Activated CD8-positive, alpha-beta memory T cell treated with anti-CD3 and anti-CD28 coated beads, Interleukin-2, amount 10 ng/mL, durations not matched to agents 7 days and 5 days (primary cell): ENCODE measurements at regions of chr19 and their contacts with region 1.

Region 1: DNA sequence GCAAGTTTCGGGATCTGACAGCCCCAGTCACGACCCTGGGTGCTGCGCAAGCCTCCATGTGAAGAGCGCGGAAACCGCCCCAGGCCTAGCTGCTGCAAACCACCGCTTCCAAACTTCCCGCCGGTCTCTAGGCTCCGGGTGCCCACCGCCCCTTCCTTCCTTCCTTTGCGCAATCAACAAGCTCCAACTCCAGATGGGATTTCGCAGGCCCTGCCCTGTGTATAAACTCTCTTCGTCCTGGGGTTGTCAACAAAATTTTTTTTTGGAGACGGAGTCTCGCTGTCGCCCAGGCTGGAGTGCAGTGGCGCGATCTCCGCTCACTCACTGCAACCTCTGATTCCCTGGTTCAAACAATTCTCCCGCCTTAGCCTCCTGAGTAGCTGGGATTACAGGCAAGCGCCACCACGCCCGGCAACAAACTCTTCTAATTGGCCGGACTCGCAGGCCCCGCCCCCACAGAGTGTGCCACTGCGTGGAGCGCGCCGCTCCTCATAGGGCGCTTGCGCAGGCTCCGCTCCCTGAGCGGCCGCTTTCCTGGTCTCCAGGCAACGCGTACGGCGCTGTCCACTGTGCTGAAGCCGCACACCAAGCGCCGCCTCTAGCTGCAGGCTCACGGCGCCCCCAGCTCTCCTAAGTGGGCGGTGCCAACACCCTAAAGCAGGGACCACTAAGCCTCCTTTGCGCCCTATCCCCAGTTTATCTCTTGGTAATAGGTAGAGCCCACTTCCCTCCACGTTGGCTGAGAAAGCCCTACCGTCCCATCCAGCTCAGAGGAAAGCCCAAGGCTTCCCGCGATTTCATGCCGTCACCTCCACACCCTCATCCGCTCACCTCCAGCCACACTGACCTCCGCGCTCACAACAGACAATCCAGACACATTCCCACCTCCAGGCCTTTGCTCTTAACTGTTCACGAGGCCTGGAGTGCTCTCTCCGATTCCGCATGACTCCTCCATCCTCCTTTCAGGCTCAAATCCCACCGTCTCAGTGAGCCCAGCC is 5.5 kb upstream of the QTRT1 start:
- DNase-seq: peak; percentile 94
- ATAC-seq: peak; percentile 99
- H3K4me3 Mint-ChIP-seq: peak overlapping the region; percentile 67
- H3K27ac Mint-ChIP-seq: no peak overlapping the region
- H3K4me1 Mint-ChIP-seq: peaks cover 14% of the 10 kb centered on the region
- H3K27me3 Mint-ChIP-seq: peaks cover 12% of the 10 kb centered on the region

Region 2: DNA sequence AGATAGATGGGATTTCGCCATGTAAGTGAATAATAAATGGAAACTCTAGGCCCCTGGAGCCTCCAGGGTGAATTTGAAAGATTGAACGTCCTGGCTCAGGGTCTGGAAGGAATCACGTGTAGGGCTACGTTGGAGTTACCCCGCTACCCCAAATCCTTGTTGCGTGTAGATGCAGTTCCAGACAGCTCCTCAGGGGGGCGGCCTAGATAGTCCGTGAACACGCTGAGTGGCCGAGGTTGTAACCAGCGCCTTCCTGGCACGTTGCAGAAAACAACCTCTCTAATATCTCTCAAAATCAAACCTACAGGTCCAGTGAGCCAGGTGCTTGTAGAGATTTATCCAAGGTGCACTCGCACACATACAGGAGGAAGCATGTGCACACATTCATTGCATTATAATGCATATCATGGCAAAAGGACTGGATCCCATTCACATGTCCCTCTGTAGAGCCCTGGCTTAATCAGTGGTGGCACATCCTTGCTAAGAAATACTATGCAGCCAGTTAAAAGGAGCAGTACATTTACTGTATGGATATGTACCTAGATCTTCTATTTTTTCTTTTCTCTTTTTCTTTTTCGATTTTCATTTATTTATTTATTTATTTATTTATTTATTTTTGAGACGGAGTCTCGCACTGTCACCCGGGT is 190.0 kb before region 1 on chr19:
- CTCF ChIA-PET with region 1: interaction called, 12 read pairs
- DNase-seq: peak; percentile 91
- ATAC-seq: peak; percentile 10
- H3K4me3 Mint-ChIP-seq: no peak overlapping the region
- H3K27ac Mint-ChIP-seq: peak overlapping the region; percentile 66
- H3K4me1 Mint-ChIP-seq: peaks cover 37% of the 10 kb centered on the region
- H3K27me3 Mint-ChIP-seq: no peaks in the 10 kb centered on the region

Region 3: DNA sequence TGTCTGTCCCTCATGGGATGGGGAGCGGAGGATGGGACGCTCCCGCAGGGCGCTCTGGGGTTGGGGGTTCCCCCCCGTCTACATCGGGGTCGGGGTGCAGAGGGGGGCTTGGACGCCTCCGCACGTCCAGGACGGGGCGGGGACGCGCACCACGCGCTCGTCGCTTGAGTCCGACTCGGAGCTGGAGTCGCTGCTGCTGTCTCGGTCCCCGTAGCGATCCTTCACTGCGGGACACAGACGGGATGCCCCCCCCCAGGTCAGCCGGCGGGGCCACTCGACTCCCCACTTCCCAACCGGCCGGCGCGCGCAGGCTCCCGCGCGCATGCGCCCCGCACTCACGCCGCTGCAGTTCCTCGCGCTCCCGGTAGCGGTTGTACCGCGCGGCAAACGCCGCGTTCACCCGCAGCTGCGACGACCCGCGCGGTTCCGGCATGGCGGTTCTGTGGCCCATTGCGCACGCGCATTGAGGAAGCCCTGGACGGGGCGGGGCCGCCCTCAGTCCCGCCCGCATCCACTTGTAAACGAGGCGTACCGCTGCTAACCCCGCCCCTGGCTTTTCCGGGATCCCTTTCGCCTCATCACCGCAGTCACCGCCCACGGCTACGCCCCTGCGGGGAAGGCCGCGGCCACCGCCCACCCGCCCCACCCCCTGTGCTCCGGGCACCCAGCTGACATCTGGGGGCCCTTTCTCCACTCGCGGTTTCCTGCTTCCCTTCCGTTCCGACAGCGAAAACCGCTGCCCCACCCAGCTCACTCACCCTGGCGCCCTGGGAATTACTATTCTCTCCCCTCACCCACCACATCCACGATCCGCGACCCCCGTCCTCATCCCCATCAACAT is 129.9 kb before region 1 on chr19 and contains the start of gene KRI1:
- CTCF ChIA-PET with region 1: interaction called, 82 read pairs
- DNase-seq: peak; percentile 99
- ATAC-seq: peak; percentile 48
- H3K4me3 Mint-ChIP-seq: peak within 1 kb of the TSS; percentile 96
- H3K27ac Mint-ChIP-seq: peak within 1 kb of the TSS; percentile 93
- H3K4me1 Mint-ChIP-seq: peaks cover 40% of the 10 kb centered on the region
- H3K27me3 Mint-ChIP-seq: no peaks in the 10 kb centered on the region
- total RNA-seq, gene KRI1: 68.1 to 72.2 TPM

Region 4: DNA sequence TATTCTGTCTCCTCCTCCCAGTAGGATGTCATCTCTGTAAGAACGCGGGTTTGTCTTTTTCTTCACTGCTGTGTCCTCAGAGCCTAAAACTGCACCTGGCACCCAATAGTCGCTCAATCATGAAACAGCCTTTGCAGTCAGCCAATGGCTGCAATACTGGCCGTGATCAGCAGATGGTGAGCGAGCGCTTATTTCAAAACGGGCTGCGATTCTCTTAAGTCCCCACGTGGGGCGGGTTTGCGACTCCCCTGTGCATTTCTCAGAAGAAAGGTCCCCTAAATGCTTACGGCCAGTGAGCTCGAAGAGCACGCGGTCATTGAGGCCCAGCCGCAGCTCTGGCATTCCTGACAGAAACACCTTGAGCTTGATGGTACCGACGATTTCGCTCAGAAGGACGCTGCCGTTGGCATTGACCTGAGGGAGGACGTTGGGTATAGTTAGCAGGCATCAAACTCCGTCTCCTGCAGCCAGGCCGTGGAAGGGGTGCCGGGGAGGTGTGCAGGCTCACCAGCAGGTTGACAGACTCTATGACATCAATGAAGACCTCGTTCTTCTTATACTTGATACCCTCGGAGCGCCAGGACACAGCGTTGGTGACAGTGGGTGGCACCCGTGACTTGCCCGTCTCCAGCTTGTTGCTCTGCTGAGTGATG is 114.6 kb before region 1 on chr19:
- CTCF ChIA-PET with region 1: interaction called, 123 read pairs
- DNase-seq: peak; percentile 94
- ATAC-seq: peak; percentile 96
- H3K4me3 Mint-ChIP-seq: no peak overlapping the region
- H3K27ac Mint-ChIP-seq: no peak overlapping the region
- H3K4me1 Mint-ChIP-seq: peaks cover 20% of the 10 kb centered on the region
- H3K27me3 Mint-ChIP-seq: no peaks in the 10 kb centered on the region

Region 5: DNA sequence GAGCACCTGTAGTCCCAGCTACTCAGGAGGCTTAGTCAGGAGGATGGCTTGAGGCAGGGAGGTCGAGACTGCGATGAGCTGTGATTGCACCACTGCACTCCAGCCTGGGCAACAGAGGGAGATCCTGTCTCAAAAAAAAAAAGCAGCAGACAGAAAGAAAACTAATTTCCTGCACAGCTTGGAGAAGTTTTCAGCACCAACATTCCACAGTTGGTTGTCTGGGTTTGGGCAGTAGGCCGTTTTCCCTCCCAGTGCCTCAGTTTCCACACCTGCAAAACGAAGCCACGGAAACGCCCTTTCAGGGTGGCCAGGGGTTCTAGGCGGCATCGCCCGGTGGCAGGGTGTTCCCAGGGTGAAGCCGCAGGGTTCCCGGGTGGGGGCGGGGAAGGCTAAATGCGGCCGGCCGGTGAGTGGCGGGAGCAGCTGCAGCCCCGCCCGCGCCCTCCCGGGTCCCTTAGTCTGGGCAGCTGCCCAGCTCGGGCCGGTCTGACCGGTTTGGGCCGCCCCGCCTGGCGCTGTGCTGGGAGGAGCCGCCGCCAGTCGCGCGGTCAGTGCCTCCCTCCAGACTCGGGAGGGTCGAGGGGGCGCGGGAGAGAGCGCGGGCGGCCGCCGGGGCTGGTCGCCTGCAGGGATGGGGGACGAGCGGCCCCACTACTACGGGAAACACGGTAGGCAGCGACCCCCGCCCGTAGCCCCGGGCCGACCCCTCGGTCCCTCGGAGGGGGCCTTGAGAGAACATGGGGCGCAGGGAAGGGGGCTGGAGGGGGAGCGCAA is 70.5 kb before region 1 on chr19 and contains the start of gene SLC44A2:
- CTCF ChIA-PET with region 1: no interaction called
- DNase-seq: no peak
- ATAC-seq: no peak
- H3K4me3 Mint-ChIP-seq: no peak within 1 kb of the TSS
- H3K27ac Mint-ChIP-seq: peak within 1 kb of the TSS; percentile 85
- H3K4me1 Mint-ChIP-seq: peaks cover 20% of the 10 kb centered on the region
- H3K27me3 Mint-ChIP-seq: no peaks in the 10 kb centered on the region
- total RNA-seq, gene SLC44A2: 83.4 to 86.8 TPM

Region 6: DNA sequence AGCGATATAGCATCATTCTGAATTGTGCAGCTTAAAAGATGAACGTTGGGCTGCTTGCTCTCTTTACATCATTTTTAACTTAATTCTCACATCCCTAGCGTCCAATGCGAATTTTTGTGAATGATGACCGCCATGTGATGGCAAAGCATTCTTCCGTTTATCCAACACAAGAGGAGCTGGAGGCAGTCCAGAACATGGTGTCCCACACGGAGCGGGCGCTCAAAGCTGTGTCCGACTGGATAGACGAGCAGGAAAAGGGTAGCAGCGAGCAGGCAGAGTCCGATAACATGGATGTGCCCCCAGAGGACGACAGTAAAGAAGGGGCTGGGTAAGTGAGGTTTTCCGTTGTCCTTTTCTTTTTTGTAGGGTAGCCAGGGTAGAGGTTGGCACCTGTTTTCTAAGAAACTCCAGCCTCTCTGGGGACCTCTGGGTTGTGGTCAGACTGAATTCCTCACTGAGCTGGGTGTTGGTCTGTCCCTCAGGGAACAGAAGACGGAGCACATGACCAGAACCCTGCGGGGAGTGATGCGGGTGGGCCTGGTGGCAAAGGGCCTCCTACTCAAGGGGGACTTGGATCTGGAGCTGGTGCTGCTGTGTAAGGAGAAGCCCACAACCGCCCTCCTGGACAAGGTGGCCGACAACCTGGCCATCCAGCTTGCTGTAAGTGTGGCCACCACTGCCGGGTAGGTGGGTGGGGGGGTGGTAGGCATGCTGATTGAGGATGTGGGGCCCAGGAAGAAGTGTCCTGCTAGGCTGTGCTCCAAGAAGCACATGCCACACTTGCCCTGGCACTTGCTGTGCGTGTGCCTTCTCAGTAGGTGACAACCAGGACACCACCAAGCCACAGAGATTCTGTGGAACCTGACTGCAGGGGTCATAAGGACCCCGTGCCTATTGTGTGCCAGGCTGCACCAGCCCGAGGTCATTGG is 24.6 kb before region 1 on chr19:
- CTCF ChIA-PET with region 1: interaction called, 27 read pairs
- DNase-seq: no peak
- ATAC-seq: no peak
- H3K4me3 Mint-ChIP-seq: no peak overlapping the region
- H3K27ac Mint-ChIP-seq: no peak overlapping the region
- H3K4me1 Mint-ChIP-seq: peaks cover 37% of the 10 kb centered on the region
- H3K27me3 Mint-ChIP-seq: no peaks in the 10 kb centered on the region

Region 7: GRCh38 chr19:10835754-10836477 is 140.2 kb after region 1 on chr19 and contains the start of gene TMED1:
- CTCF ChIA-PET with region 1: interaction called, 20 read pairs
- DNase-seq: peak; percentile 99
- ATAC-seq: peak; percentile 92
- H3K4me3 Mint-ChIP-seq: peak within 1 kb of the TSS; percentile 88
- H3K27ac Mint-ChIP-seq: peak within 1 kb of the TSS; percentile 96
- H3K4me1 Mint-ChIP-seq: peaks cover 18% of the 10 kb centered on the region
- H3K27me3 Mint-ChIP-seq: no peaks in the 10 kb centered on the region
- total RNA-seq, gene TMED1: 16.0 to 19.2 TPM